ENCODE measurements at regions of chr7 and their contacts with region 1.

Region 1: DNA sequence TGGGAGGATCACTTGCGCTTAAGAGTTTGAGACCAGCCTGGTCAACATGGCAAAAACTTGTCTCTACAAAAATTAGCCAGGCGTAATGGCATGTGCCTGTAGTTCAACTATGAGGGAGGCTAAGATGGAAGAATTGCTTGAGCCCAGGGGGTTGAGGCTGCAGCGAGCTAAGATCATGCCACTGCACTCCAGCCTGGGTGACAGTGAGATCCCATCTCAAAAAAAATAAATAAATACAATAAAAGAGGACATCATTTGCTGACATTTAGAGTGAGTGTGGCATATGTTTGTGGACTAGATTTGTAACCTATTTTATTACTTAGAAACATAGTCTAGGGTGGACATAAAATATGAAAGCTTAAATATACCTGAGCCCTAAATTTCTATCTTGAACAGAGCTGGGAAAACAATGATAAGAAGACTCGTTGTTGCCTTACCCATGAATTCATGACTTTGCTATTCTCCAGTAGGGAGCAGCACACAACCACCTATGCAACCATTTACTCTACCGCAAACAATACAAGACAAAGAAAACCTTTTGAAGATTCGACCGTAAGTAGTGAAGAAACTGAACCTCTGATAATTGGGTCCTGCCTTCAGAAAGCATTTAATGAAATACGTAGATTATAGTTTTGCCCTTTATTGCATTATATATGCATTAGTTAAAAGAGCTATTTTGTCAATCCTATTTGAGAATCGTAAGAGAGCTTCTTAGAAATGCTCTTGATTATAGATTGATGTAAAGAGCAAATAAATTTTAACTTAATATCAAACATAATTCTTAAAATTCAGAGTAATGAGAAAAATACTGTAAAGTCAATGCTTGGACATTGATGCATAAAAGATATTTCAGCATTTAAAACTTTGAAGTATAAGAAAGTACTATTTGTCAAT is 83.5 kb downstream of the GNAT3 start:
- DNase-seq: no peak
- H3K4me3 ChIP-seq: no peak overlapping the region
- H3K27ac ChIP-seq: no peak overlapping the region
- H3K27me3 ChIP-seq: no peaks in the 10 kb centered on the region
- CTCF ChIP-seq: peak; percentile 72

Region 2: GRCh38 chr7:80379034-80379982 is 49.1 kb before region 1 on chr7:
- CTCF ChIA-PET with region 1: no interaction called
- POLR2A ChIA-PET with region 1: no interaction called
- DNase-seq: no peak
- H3K4me3 ChIP-seq: no peak overlapping the region
- H3K27ac ChIP-seq: no peak overlapping the region
- H3K27me3 ChIP-seq: no peaks in the 10 kb centered on the region
- CTCF ChIP-seq: no peak

Region 3: DNA sequence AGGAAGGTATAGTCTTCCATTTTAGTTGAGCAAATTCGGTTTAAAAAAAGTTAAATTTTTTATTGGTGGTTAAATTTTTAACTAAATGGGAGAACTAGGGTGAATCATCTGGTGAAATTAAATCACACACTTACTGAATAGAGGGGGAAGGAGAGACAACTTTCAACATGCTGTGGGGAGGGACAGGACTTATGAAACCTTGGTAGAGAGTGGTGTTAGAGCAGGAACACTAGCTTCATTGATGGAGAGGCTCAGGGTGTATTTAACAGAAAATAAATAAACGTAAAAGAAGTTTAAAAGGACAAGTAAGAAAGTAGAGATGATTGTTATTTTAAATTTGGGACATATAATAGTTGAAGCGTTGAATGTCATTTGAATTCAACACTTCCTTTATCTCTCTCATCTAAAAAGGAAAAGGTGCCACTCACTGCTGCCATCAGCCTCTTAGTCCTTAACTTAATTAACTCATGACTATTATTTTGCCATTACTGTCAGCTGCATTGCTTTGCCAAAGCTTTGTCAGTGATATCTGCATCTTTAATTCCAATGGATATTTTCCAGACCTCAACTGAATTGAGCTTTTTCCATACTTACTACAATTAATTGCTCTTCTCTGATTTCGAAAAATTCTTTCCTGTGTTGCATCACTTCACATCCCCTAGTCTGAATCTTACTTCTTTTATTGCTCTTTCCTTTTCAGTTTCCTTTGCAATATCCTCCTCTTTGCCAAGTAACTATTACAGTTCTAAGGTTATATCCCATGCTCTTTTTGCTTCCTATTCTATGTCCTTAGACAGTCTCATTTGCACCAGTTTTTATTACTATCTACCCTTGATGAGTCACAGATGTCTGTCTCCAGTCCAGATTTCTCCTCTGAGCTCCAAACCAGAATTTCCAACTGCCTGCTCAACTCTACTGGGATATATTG is 11.8 kb after region 1 on chr7:
- CTCF ChIA-PET with region 1: interaction called, 13 read pairs
- POLR2A ChIA-PET with region 1: no interaction called
- DNase-seq: no peak
- H3K4me3 ChIP-seq: no peak overlapping the region
- H3K27ac ChIP-seq: peak overlapping the region; percentile 34
- H3K27me3 ChIP-seq: no peaks in the 10 kb centered on the region
- CTCF ChIP-seq: no peak

Region 4: GRCh38 chr7:80445351-80445750 is 16.9 kb after region 1 on chr7:
- CTCF ChIA-PET with region 1: interaction called, 13 read pairs
- POLR2A ChIA-PET with region 1: no interaction called
- DNase-seq: no peak
- H3K4me3 ChIP-seq: no peak overlapping the region
- H3K27ac ChIP-seq: no peak overlapping the region
- H3K27me3 ChIP-seq: no peaks in the 10 kb centered on the region
- CTCF ChIP-seq: no peak

Region 5: DNA sequence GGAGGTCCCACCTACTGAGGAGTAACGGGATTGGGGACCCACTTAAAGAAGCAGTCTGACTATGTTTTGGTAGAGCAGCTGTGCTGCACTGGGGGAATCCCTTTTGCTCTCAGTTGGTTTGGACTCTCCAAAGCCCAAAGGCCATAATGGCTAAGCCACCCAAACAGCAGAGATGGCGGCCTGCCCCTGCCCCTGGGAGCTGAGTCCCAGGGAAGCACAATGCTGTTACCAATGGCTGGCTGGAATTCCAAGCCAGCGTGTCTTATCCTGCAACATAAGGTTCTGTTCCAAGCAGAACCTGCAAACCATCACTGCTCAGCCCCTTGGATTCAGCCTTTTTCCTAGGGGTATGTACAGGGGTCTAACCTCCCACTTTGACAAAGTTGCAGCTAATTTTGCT is 137.1 kb after region 1 on chr7:
- CTCF ChIA-PET with region 1: no interaction called
- POLR2A ChIA-PET with region 1: no interaction called
- DNase-seq: no peak
- H3K4me3 ChIP-seq: no peak overlapping the region
- H3K27ac ChIP-seq: no peak overlapping the region
- H3K27me3 ChIP-seq: no peaks in the 10 kb centered on the region
- CTCF ChIP-seq: no peak

Region 6: DNA sequence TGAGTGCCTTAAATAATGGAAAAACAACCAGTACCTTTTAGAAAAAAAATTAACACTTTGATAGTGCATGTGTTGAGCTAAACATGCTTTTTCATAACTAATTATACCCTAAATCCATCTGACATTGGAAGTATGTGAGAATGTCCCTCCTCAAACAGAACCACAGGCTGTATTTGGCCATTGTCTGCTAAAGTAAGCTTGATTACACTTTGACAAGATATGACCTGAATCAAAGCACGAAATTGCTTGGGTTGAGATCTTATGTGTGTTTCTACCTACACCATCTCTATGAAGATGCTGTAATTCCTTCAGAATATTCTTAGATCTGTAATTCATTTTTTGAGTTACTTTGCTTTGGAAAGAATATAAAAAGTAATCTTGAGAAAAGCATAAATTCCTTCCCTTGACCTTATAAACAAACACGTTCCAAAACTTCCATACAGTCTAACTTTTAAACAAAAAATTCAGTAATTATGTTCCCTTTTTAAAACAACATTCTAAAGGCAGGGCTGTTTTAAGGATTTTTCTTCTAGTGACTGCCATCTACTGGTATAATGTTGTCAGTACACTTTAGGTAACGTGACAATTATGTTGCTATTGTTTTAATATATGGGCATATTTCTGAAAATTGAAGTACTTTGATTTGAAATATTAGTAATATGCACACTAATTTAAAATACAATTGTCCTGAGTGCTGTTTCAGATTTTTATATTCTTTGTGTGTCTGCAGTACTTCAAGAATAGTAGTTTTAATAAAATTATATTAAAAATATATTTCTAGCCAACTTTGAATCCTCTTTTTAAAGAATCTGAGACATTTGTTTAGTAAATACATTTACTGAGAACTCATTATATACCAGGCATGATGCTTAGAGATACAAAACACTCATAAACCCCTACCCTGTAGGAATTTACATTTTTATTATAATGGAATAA is 231.0 kb after region 1 on chr7:
- CTCF ChIA-PET with region 1: interaction called, 61 read pairs
- POLR2A ChIA-PET with region 1: no interaction called
- DNase-seq: no peak
- H3K4me3 ChIP-seq: no peak overlapping the region
- H3K27ac ChIP-seq: no peak overlapping the region
- H3K27me3 ChIP-seq: no peaks in the 10 kb centered on the region
- CTCF ChIP-seq: peak; percentile 64

Region 7: DNA sequence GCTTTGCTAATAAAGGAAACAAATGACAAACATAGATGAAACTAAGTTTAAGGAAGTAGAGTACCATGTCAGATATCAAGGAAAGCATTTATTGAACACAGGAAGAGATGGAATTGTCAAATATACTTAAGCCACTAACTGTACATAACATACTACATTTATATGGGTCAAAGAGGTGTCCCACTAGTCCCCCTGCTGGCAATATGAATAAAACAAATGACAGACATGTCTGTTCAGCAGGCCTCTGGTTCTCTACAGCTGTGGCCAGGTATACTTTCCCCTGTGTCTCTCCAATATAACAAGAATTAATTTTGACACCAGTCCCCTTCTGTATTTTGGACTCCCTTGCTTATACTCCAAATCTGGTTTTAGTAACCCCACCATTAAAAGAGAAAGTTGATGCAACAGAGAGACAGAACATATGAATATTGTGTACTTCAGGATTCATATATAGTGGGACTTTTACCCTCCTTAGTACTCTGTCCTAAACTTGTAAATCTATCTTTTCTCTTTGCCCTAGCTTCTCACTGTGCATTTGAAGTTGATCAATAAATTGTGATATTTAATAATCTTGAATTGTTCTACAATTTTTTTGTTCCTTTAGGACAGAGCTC is 253.0 kb after region 1 on chr7:
- CTCF ChIA-PET with region 1: interaction called, 64 read pairs
- POLR2A ChIA-PET with region 1: no interaction called
- DNase-seq: no peak
- H3K4me3 ChIP-seq: no peak overlapping the region
- H3K27ac ChIP-seq: no peak overlapping the region
- H3K27me3 ChIP-seq: no peaks in the 10 kb centered on the region
- CTCF ChIP-seq: peak; percentile 49

Region 8: DNA sequence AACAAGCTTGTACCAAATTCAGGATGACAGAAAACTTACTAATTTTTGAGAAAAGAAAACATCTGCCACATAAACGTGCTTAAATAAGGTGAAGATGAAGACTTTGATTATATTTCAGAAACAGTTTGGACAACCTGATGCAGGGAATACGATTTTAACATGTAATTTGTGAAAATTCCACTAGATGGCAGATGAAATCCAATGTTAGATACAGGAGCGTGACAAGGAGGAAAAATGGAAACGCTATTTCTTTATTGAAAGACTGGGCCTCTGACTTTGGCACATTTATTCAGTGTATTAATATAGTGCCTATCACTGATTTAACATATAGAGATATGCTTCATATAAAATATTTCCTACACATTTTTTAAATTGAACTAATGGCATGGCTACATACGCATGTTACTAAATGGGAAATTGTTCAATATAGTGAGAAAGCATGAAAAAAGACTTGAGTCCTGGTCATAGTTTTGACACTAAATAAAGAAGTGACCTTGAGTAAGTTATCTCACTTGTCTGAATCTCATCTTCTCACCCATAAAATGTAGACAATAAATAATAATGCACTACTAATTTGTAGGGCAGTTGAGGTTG is 270.7 kb after region 1 on chr7:
- CTCF ChIA-PET with region 1: interaction called, 11 read pairs
- POLR2A ChIA-PET with region 1: no interaction called
- DNase-seq: no peak
- H3K4me3 ChIP-seq: no peak overlapping the region
- H3K27ac ChIP-seq: no peak overlapping the region
- H3K27me3 ChIP-seq: no peaks in the 10 kb centered on the region
- CTCF ChIP-seq: peak; percentile 58

Measured in AG04450 (cell line).